Activated CD4-positive, alpha-beta memory T cell treated with anti-CD3 and anti-CD28 coated beads, Interleukin-2, amount 10 ng/mL, durations not matched to agents 7 days and 5 days (primary cell): ENCODE measurements at regions of chr12 and their contacts with region 1.

Region 1: GRCh38 chr12:100200463-100201181 is at the start of gene ACTR6:
- DNase-seq: peak; percentile 98
- H3K4me3 Mint-ChIP-seq: peak within 1 kb of the TSS; percentile 95
- H3K27ac Mint-ChIP-seq: peak within 1 kb of the TSS; percentile 99
- H3K4me1 Mint-ChIP-seq: peaks cover 44% of the 10 kb centered on the region
- H3K27me3 Mint-ChIP-seq: no peaks in the 10 kb centered on the region
- total RNA-seq, gene ACTR6: 53.4 to 56.5 TPM

Region 2: DNA sequence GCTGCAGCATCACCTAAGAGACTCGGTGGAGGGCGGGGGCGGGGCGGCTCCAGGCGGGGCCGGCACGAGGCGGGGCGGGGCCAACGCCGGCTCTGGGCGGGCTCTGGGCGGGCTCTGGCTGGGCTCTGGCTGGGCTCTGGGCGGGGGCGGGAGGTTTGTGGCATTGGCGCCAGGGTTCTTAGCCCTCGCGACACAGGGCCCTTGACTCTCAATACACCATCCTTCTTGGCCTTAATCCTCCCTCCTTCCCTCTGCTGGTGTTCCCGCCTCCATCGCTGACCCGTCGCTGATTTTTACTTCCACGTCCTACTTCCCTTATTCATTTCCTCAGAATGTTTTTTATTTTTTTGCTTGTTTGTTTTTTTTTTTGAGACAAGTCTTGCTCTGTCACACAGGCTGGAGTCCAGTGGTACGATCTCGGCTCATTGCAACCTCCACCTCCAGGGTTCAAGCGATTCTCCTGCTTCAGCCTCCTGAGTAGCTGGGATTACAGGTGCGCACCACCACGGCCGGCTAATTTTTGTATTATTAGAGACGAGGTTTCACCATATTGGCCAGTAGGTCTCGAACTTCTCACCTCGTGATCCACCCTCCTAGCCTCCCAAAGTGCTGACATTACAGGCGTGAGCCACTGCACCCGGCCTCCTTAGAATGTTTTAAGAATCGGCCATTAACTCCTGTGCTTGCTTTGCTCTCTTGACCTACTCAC is 57.6 kb before region 1 on chr12 and contains the start of gene BLTP3B:
- CTCF ChIA-PET with region 1: interaction called, 13 read pairs
- POLR2A ChIA-PET with region 1: interaction called, 25 read pairs
- DNase-seq: peak; percentile 92
- H3K4me3 Mint-ChIP-seq: peak within 1 kb of the TSS; percentile 83
- H3K27ac Mint-ChIP-seq: peak within 1 kb of the TSS; percentile 95
- H3K4me1 Mint-ChIP-seq: peaks cover 43% of the 10 kb centered on the region
- H3K27me3 Mint-ChIP-seq: no peaks in the 10 kb centered on the region
- total RNA-seq, gene BLTP3B: 37.3 to 40.4 TPM

Region 3: GRCh38 chr12:100163416-100164152 is 37.0 kb before region 1 on chr12:
- CTCF ChIA-PET with region 1: no interaction called
- POLR2A ChIA-PET with region 1: interaction called, 17 read pairs
- DNase-seq: peak; percentile 78
- H3K4me3 Mint-ChIP-seq: peak overlapping the region; percentile 28
- H3K27ac Mint-ChIP-seq: peak overlapping the region; percentile 62
- H3K4me1 Mint-ChIP-seq: peaks cover 14% of the 10 kb centered on the region
- H3K27me3 Mint-ChIP-seq: no peaks in the 10 kb centered on the region

Region 4: GRCh38 chr12:100174495-100174894 is 26.1 kb before region 1 on chr12:
- CTCF ChIA-PET with region 1: no interaction called
- POLR2A ChIA-PET with region 1: no interaction called
- DNase-seq: no peak
- H3K4me3 Mint-ChIP-seq: no peak overlapping the region
- H3K27ac Mint-ChIP-seq: no peak overlapping the region
- H3K4me1 Mint-ChIP-seq: no peaks in the 10 kb centered on the region
- H3K27me3 Mint-ChIP-seq: no peaks in the 10 kb centered on the region

Region 5: GRCh38 chr12:100213016-100213891 is 12.6 kb after region 1 on chr12:
- CTCF ChIA-PET with region 1: interaction called, 7 read pairs
- POLR2A ChIA-PET with region 1: interaction called, 10 read pairs
- DNase-seq: no peak
- H3K4me3 Mint-ChIP-seq: no peak overlapping the region
- H3K27ac Mint-ChIP-seq: no peak overlapping the region
- H3K4me1 Mint-ChIP-seq: peaks cover 8% of the 10 kb centered on the region
- H3K27me3 Mint-ChIP-seq: no peaks in the 10 kb centered on the region

Region 6: GRCh38 chr12:100266835-100267618 is 66.4 kb after region 1 on chr12 and contains the starts of genes DEPDC4 and SCYL2:
- CTCF ChIA-PET with region 1: interaction called, 10 read pairs
- POLR2A ChIA-PET with region 1: interaction called, 70 read pairs
- DNase-seq: peak; percentile 93
- H3K4me3 Mint-ChIP-seq: peak within 1 kb of the TSS; percentile 91
- H3K27ac Mint-ChIP-seq: peak within 1 kb of the TSS; percentile 93
- H3K4me1 Mint-ChIP-seq: peaks cover 31% of the 10 kb centered on the region
- H3K27me3 Mint-ChIP-seq: no peaks in the 10 kb centered on the region
- total RNA-seq, gene DEPDC4: 1.3 to 2.1 TPM
- total RNA-seq, gene SCYL2: 36.4 to 37.4 TPM